Testis (tissue), 5 donors: ENCODE measurements at regions of chr3 and their contacts with region 1.

Region 1: DNA sequence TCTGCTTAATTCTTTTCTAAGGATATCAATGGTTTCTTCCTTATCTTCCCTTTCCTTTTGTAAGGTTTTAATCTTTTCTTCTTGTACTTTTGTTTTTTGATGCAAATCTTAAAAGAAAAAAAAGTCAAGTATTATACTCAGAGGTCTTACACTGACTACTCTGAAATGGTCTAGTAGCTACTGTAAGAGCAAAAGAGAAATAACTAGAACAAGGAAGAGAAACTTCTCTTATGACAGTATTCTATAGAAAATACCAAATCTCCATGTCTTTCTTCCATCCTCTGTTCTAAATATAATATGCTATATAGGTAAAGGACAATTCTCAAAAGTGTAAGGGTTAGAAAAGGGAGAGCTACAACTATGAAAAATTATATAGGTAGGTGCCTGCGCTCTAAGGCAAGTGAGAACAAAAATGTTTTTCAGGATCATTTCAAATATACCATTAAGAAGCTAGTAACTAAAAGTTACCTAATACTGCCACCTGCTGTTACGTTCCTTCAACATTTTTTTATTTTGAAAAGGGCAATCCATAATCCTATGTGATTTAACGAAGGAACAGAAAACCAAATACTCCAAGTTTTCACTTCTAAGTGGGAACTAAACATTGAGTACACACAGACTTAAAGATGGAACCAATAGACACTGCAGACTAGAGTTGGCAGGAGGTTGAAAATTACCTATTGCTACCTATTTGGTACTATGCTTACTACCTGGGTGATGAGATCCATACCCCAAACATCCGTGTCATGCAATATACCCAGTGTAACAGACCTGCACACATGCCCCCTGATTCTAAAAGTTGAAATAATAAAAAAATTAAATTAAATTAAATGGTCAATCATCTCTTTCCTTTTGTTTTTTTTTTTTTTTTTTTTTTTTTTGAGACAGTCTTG is 36.7 kb downstream of the CIP2A start:
- DNase-seq: no peak
- H3K4me3 ChIP-seq: no peak overlapping the region
- H3K27ac ChIP-seq: no peak overlapping the region
- H3K4me1 ChIP-seq: peaks cover 6% of the 10 kb centered on the region
- H3K27me3 ChIP-seq: no peaks in the 10 kb centered on the region
- CTCF ChIP-seq: peak; percentile 37 to 54 (median 38)
- POLR2A ChIP-seq: no peak

Region 2: GRCh38 chr3:108221911-108222852 is 330.3 kb before region 1 on chr3 and contains the start of gene IFT57:
- intact Hi-C with region 1: no loop called
- DNase-seq: peak; percentile 99
- H3K4me3 ChIP-seq: peak within 1 kb of the TSS; percentile 76 to 84
- H3K27ac ChIP-seq: peak within 1 kb of the TSS; percentile 57 to 86
- H3K4me1 ChIP-seq: peaks cover 23% of the 10 kb centered on the region
- H3K27me3 ChIP-seq: no peaks in the 10 kb centered on the region
- CTCF ChIP-seq: no peak
- POLR2A ChIP-seq: peak; percentile 2
- total RNA-seq, gene IFT57: 112 to 185 TPM

Region 3: GRCh38 chr3:108489771-108490170 is 62.7 kb before region 1 on chr3:
- intact Hi-C with region 1: loop called (anchors 5 kb)
- DNase-seq: peak; percentile 41
- H3K4me3 ChIP-seq: no peak overlapping the region
- H3K27ac ChIP-seq: no peak overlapping the region
- H3K4me1 ChIP-seq: no peaks in the 10 kb centered on the region
- H3K27me3 ChIP-seq: no peaks in the 10 kb centered on the region
- CTCF ChIP-seq: peak; percentile 66 to 85 (median 83)
- POLR2A ChIP-seq: no peak

Region 4: GRCh38 chr3:108603691-108604090 is 51.2 kb after region 1 on chr3:
- intact Hi-C with region 1: no loop called
- DNase-seq: no peak
- H3K4me3 ChIP-seq: no peak overlapping the region
- H3K27ac ChIP-seq: no peak overlapping the region
- H3K4me1 ChIP-seq: peaks cover 13% of the 10 kb centered on the region
- H3K27me3 ChIP-seq: no peaks in the 10 kb centered on the region
- CTCF ChIP-seq: no peak
- POLR2A ChIP-seq: no peak

Region 5: DNA sequence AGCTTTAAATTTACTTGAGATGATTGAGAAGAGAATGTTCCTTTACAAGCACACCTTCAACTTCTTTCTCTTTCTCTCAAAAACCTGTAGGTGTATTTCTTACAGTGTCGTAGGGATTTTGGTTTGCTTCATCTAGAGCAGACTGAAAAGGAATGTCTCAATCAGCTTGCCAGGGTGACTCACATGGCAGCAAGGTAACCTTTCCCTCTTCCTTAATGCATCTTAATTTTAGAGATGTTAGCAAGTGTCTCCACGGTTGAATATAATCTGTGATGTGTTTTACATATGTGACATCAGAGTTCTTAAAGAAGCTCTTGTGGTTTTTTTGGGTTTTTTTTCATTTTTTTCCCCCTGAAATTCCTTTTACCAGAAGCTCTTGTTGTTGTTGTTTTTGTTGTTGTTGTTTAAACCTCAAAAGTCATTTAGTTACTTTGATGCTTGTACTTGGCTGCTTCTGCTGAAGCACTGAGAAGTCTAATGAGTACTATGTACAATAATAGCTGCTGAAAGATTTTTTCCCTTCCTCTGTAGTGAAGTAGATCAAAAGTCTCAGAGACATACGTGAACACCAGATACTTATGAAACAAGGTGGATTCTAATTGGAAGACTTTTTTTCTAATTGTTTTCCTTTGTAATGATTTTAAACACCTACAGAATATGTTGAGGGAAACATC is 121.6 kb after region 1 on chr3:
- intact Hi-C with region 1: no loop called
- DNase-seq: no peak
- H3K4me3 ChIP-seq: no peak overlapping the region
- H3K27ac ChIP-seq: no peak overlapping the region
- H3K4me1 ChIP-seq: no peaks in the 10 kb centered on the region
- H3K27me3 ChIP-seq: no peaks in the 10 kb centered on the region
- CTCF ChIP-seq: no peak
- POLR2A ChIP-seq: no peak

Region 6: GRCh38 chr3:108736821-108737220 is 184.3 kb after region 1 on chr3:
- intact Hi-C with region 1: no loop called
- DNase-seq: no peak
- H3K4me3 ChIP-seq: no peak overlapping the region
- H3K27ac ChIP-seq: no peak overlapping the region
- H3K4me1 ChIP-seq: no peaks in the 10 kb centered on the region
- H3K27me3 ChIP-seq: no peaks in the 10 kb centered on the region
- CTCF ChIP-seq: no peak
- POLR2A ChIP-seq: no peak